AG04449 (cell line): ENCODE measurements at regions of chr5 and their contacts with region 1.

Region 1: GRCh38 chr5:5492087-5492933 is 69.8 kb downstream of the ICE1 start:
- DNase-seq: peak; percentile 4
- H3K4me3 ChIP-seq: no peak overlapping the region
- CTCF ChIP-seq: peak; percentile 52

Region 2: GRCh38 chr5:5169466-5169865 is 322.8 kb before region 1 on chr5:
- CTCF ChIA-PET with region 1: no interaction called
- POLR2A ChIA-PET with region 1: no interaction called
- DNase-seq: no peak
- H3K4me3 ChIP-seq: no peak overlapping the region
- CTCF ChIP-seq: no peak

Region 3: DNA sequence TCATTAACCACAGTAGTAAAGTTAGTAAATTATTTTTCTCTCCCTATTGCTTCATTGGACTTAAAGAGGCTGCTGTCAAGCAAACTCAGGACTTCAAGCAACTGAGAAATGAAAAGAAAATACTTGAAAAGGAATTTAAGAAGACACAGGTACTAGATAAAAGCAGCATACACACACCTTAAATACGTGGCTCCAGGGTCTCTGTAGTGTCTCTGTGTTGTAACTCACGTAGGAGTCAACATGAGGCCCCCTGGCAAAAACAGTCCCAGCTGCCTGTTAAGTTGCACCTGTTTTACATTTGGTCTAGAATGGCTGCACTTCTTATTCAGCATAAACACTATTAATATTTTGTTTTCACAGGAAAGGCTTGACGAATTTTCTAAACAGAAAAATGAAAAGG is 44.9 kb before region 1 on chr5:
- CTCF ChIA-PET with region 1: no interaction called
- POLR2A ChIA-PET with region 1: no interaction called
- DNase-seq: no peak
- H3K4me3 ChIP-seq: no peak overlapping the region
- CTCF ChIP-seq: no peak

Region 4: DNA sequence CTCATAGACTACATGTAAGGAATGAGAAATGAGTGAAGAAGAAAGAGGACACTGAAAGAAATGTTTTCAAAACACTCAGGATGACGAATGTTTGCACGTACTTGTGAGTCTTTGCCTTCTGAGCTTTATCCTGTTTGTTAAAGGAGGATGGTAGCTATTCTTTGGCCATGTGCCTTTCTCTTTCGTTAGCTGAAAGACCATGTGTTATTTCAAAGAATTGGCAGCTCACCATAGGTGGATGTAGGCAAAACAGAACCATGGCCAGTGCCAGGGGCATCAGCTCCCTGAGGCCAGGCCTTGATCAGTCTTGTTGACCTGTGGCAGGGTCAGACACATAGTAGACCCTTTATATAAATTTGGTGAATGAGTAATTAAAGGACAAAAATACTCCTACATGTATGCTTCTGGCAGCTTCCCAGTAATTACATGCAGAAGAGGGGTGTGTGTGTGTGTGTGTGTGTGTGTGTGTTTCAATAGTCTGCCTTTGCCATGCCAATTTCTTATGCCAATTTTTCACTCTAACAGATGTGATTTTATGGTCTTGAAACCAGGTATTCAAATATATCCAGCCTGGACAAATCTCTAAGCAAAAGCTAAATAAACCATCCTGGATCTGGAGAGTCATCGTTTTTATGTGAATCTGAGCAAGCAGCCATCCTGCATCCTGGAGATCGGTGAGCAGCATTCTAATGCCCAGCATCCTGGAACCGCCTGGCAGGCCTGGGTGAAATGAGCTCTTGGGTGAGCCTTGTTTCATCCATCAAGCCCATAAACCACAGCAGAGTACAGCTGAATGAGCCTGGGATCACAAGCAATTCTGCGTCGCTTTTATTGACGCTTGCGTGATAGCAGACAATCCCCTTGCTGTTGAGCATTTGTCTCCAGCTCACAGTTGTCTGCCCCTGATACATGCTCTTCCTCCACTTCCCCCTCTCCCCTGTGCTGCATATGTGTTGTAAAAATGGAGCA is 410.7 kb after region 1 on chr5:
- CTCF ChIA-PET with region 1: no interaction called
- POLR2A ChIA-PET with region 1: no interaction called
- DNase-seq: no peak
- H3K4me3 ChIP-seq: no peak overlapping the region
- CTCF ChIP-seq: no peak

Region 5: GRCh38 chr5:6576861-6577501 is 1084.7 kb after region 1 on chr5:
- CTCF ChIA-PET with region 1: interaction called, 31 read pairs
- POLR2A ChIA-PET with region 1: no interaction called
- DNase-seq: no peak
- H3K4me3 ChIP-seq: no peak overlapping the region
- CTCF ChIP-seq: peak; percentile 53

Region 6: DNA sequence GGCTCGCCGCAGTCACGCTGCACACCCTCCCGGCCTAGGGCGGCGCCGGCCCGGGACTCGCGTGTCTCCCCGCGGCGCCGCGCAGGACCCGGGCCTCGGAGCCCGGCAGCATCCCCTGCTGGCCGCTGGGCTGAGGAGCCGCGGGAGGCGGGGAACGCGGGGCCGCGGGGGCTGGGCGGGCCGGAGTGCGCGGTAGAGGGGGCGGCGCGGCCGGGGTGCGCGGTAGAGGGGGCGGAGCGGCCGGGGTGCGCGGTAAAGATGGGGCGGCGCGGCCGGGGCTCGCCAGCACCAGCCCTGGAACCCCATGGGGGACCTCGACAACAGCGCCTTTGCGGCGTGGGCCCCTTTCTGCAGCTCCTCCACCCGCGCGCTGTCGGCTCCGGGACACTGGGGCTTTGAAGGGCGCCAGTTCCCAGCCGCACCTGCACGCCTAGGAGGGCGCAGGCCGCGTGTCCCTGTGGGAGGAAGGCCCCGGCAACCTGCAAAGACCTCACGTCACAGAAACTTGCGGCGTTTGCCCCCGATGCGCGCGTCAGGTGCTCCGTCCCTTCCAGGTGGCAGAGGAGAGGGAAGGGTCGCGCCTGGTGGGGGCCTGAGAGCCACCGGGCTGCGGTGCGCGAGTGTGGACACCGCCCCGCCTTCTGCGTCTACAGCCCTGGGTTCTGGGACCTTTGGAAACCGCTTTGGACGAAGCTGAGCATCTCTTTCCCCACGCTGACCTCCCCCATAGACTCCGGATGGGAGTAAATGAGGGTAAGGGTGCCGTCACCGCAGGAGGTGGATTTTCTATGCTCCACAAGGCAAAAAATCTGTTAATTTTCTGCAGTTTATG is 1091.0 kb after region 1 on chr5:
- CTCF ChIA-PET with region 1: interaction called, 31 read pairs
- POLR2A ChIA-PET with region 1: no interaction called
- DNase-seq: no peak
- H3K4me3 ChIP-seq: peak overlapping the region; percentile 36
- CTCF ChIP-seq: peak; percentile 48